ENCODE measurements at regions of chr2 and their contacts with region 1.

Region 1: DNA sequence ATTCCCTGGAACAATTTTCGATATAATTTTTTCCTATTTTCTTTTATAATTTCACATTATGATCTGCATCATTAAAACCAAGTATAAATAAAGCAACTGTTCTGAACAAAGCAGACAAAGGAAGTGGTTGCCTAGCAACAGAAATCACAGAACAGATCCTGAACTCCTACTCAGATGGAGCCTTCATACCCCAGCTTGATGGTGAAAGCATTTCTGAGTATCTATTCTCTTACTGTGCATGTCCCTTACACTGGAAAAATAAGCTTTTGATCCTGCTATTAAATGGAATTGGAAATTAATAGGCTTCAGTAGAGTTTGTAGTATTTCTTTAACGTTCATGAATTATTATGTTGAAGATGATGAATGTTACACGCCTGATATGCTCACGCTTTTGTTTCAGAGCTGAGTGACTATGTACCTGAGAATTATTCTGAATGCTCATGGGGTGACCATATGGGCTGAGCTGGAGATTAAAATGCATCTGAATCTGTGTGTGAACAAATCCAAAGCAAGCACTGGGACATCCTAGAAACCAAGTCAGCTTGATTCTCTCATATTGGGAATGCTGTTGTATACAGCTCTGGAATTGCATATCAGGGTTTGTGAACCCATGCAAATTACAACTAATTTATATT is 254.0 kb downstream of the KCNJ3 start:
- DNase-seq: no peak
- H3K4me3 Mint-ChIP-seq: no peak overlapping the region
- H3K27ac Mint-ChIP-seq: no peak overlapping the region
- H3K4me1 Mint-ChIP-seq: no peaks in the 10 kb centered on the region
- H3K27me3 Mint-ChIP-seq: no peaks in the 10 kb centered on the region

Region 2: DNA sequence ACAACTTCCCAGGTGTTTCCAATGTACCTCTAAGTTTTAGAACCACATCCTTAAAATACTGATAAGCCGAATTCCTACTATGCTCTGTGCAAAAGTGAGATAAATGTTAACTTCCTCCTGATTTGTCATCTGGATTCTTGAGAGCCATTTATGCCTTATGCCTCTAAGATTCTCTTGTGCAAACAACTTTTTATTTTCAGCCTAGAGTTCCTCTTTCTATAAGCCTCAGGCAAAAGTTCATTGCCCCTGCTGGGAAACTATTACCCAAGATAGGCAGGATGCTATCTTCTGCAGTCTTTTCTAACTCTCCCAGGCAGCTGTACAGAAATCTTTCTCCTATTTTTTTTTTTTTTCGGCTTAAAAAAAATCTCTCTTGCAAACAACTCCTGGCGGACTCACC is 37.9 kb before region 1 on chr2:
- intact Hi-C with region 1: loop called (anchors 1 kb)
- DNase-seq: no peak
- H3K4me3 Mint-ChIP-seq: no peak overlapping the region
- H3K27ac Mint-ChIP-seq: no peak overlapping the region
- H3K4me1 Mint-ChIP-seq: no peaks in the 10 kb centered on the region
- H3K27me3 Mint-ChIP-seq: no peaks in the 10 kb centered on the region